ENCODE measurements at regions of chr10 and their contacts with region 1.

Region 1: GRCh38 chr10:95783741-95784140 is 27.8 kb downstream of the ENTPD1 start:
- DNase-seq: peak; percentile 84
- ATAC-seq: peak; percentile 52
- H3K4me3 ChIP-seq: peak overlapping the region in 1 of 5 experiments; percentile 13
- H3K4me3 Mint-ChIP-seq: peak overlapping the region; percentile 38
- H3K27ac ChIP-seq: peak overlapping the region; percentile 92 to 96
- H3K27ac Mint-ChIP-seq: peak overlapping the region; percentile 92
- H3K4me1 ChIP-seq: peaks cover 75 to 76% of the 10 kb centered on the region in 2 donors
- H3K4me1 Mint-ChIP-seq: peaks cover 90% of the 10 kb centered on the region
- H3K27me3 ChIP-seq: no peaks in the 10 kb centered on the region
- H3K27me3 Mint-ChIP-seq: no peaks in the 10 kb centered on the region
- CTCF ChIP-seq: no peak

Region 2: GRCh38 chr10:95767884-95768556 is 15.7 kb before region 1 on chr10:
- CTCF ChIA-PET with region 1: interaction called, 9 read pairs
- POLR2A ChIA-PET with region 1: interaction called, 3 read pairs
- intact Hi-C with region 1: loop called (anchors 2 kb)
- DNase-seq: peak; percentile 73
- ATAC-seq: peak; percentile 82
- H3K4me3 ChIP-seq: peak overlapping the region in 1 of 5 experiments; percentile 18
- H3K4me3 Mint-ChIP-seq: peak overlapping the region; percentile 66
- H3K27ac ChIP-seq: peak overlapping the region; percentile 72 to 90
- H3K27ac Mint-ChIP-seq: peak overlapping the region; percentile 95
- H3K4me1 ChIP-seq: peaks cover 50 to 64% of the 10 kb centered on the region in 2 donors
- H3K4me1 Mint-ChIP-seq: peaks cover 71% of the 10 kb centered on the region
- H3K27me3 ChIP-seq: no peaks in the 10 kb centered on the region
- H3K27me3 Mint-ChIP-seq: no peaks in the 10 kb centered on the region
- CTCF ChIP-seq: no peak

Region 3: DNA sequence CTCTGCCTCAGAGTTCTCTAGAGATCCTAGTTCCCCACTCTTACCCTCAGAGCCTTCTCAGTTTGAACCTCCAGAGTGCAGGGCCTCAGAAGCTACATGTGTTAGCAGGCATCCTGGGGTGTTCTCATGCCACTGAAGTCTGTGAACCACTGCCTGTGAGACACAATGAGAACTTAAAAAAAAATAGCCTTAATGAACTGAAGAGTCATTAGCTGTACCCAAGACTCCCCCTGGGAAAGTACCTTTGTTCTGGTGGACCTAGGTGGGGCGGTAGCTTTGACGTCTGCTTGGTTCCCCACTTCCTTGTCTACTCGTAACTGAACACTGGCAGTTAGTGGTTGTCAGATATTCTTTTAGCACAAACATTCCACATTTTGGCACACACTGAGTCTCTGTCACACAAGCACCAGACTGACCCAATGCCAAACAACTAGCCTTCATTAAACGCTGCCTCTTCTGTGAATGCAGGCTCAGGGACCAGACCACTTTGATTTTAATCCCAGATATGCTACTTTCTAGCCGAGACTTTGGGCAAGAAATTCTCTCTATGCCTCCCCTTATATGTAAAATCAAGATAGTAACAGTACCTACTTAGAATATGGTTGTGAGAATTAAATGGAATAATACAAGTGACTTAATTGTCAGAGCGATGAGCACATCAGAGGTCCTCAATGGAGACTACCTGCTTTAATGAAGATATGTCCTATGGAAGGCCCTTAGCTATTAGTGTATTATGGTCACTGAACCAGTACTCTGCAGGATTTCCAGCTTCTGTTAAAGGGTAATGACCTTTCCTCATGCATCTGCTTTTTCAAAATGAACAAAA is 48.7 kb after region 1 on chr10:
- CTCF ChIA-PET with region 1: interaction called, 11 read pairs
- POLR2A ChIA-PET with region 1: interaction called, 3 read pairs
- intact Hi-C with region 1: loop called (anchors 1 kb)
- DNase-seq: peak; percentile 94
- ATAC-seq: peak; percentile 89
- H3K4me3 ChIP-seq: peak overlapping the region in 3 of 5 experiments; percentile 11 to 36 (median 23)
- H3K4me3 Mint-ChIP-seq: peak overlapping the region; percentile 83
- H3K27ac ChIP-seq: peak overlapping the region; percentile 89 to 95
- H3K27ac Mint-ChIP-seq: peak overlapping the region; percentile 96
- H3K4me1 ChIP-seq: peaks cover 82 to 87% of the 10 kb centered on the region in 2 donors
- H3K4me1 Mint-ChIP-seq: peaks cover 82% of the 10 kb centered on the region
- H3K27me3 ChIP-seq: no peaks in the 10 kb centered on the region
- H3K27me3 Mint-ChIP-seq: no peaks in the 10 kb centered on the region
- CTCF ChIP-seq: no peak

Region 4: DNA sequence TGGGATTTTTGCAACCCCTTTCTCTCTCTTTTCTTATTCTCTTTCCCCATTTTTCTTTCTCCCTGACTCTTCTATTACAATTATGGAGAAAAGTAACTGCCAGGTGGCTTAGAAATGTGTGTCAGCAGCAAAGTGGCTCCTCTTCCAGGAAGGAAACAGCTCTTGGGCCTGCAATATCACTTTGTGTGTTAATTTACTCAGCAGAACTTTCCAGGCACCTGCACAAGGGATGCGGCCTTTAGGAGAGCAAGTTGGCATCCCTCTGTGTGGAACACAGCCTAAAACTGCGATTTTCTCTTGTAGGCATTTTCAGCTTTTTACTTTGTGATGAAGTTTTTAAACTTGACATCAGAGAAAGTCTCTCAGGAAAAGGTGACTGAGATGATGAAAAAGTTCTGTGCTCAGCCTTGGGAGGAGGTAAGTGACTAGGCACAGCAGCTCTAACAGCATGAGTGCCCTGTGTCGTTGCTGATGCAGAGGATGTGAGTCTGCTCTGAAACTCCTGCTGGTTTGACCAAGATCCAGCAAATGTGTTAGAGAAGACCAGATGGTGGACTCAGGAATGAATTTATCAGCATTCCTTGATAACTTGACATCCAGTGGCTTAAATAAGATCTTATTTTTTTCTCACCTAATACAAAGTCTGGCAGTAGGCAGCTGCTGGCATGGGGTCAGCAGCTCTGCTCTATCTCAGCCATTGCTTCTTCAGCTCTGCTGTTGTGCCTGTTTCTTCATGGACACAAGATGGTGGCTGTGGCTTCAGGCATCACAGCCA is 76.6 kb after region 1 on chr10:
- CTCF ChIA-PET with region 1: no interaction called
- POLR2A ChIA-PET with region 1: no interaction called
- intact Hi-C with region 1: no loop called
- DNase-seq: no peak
- ATAC-seq: no peak
- H3K4me3 ChIP-seq: no peak overlapping the region
- H3K4me3 Mint-ChIP-seq: no peak overlapping the region
- H3K27ac ChIP-seq: no peak overlapping the region
- H3K27ac Mint-ChIP-seq: peak overlapping the region; percentile 41
- H3K4me1 ChIP-seq: peaks cover 8 to 10% of the 10 kb centered on the region in 2 donors
- H3K4me1 Mint-ChIP-seq: peaks cover 14% of the 10 kb centered on the region
- H3K27me3 ChIP-seq: no peaks in the 10 kb centered on the region
- H3K27me3 Mint-ChIP-seq: no peaks in the 10 kb centered on the region
- CTCF ChIP-seq: no peak